ENCODE measurements at regions of chr10 and their contacts with region 1.

Region 1: DNA sequence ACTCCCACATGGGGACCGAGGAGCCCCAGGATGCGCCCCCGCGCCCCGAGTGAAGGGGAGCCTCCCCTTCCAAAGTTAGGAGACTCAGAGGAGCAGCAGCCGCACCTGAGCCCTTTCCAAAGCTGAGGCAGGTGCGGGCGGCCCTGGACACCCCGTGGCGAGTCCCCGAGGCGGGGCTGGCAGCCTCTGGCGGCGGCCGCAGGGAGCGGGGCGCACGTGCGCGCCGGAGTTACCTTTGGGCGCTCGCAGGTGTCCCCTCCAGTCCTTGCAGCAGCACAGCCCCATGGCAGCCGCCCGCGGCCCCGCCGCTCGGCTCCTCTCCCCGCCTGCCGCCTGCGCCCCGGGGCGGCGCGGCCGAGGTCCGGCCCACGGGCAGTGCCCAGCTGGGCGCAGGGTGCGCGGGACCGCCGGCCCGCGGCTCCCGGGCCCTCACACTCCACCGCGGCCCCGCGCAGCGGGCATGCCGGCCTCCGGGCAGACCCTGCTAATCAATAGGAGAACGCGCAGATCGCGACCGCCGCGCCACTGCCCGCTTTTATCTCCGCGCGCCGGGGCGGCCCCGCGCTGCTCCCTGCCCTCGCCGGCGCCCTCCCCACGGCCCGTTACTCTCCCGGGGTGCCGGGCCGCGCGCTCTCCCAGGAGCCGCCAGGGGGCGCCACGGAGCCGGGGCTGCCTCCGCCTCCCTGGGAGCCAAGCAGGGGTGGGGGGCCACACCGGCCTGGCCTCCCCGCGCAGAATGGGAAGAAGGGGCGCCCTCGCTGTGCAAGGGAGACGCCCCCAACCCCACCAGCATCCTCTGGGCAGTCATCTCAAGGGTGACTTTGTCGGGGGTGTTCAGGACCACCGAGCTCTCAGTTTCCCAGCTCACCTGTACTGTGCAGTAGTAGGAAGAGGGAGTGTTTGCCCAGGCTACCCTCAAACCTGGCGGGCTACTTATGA is 80.8 kb downstream of the ARHGAP22 start:
- DNase-seq: peak; percentile 57 to 77
- H3K4me3 ChIP-seq: peak overlapping the region; percentile 54
- H3K4me3 Mint-ChIP-seq: peak overlapping the region; percentile 74
- H3K27ac Mint-ChIP-seq: no peak overlapping the region
- H3K4me1 ChIP-seq: peaks cover 8% of the 10 kb centered on the region; the same call in 1 of the 2 replicates
- H3K4me1 Mint-ChIP-seq: peaks cover 6% of the 10 kb centered on the region
- H3K27me3 ChIP-seq: no peaks in the 10 kb centered on the region
- H3K27me3 Mint-ChIP-seq: no peaks in the 10 kb centered on the region
- CTCF ChIP-seq: peak; percentile 29 to 86

Region 2: GRCh38 chr10:48541144-48541795 is 17.2 kb after region 1 on chr10:
- CTCF ChIA-PET with region 1: no interaction called
- POLR2A ChIA-PET with region 1: no interaction called
- intact Hi-C with region 1: loop called (anchors 2 kb)
- DNase-seq: peak; percentile 75 to 76
- H3K4me3 ChIP-seq: no peak overlapping the region
- H3K4me3 Mint-ChIP-seq: no peak overlapping the region
- H3K27ac Mint-ChIP-seq: peak overlapping the region; percentile 43
- H3K4me1 ChIP-seq: peaks cover 58% of the 10 kb centered on the region
- H3K4me1 Mint-ChIP-seq: peaks cover 34% of the 10 kb centered on the region
- H3K27me3 ChIP-seq: no peaks in the 10 kb centered on the region
- H3K27me3 Mint-ChIP-seq: no peaks in the 10 kb centered on the region
- CTCF ChIP-seq: no peak

Measured in Caco-2 (cell line).